Thyroid gland (tissue), 4 donors: ENCODE measurements at regions of chr11 and their contacts with region 1.

Region 1: GRCh38 chr11:15663777-15664218 is 549.1 kb downstream of the INSC start:
- DNase-seq: peak; percentile 83 to 89
- H3K4me3 ChIP-seq: no peak overlapping the region
- H3K27ac ChIP-seq: peak overlapping the region; percentile 63 to 81 (median 73)
- H3K4me1 ChIP-seq: peaks cover 8 to 32% of the 10 kb centered on the region in 2 donors
- H3K27me3 ChIP-seq: no peaks in the 10 kb centered on the region
- CTCF ChIP-seq: no peak
- POLR2A ChIP-seq: no peak

Region 2: GRCh38 chr11:15390857-15391256 is 272.9 kb before region 1 on chr11:
- intact Hi-C with region 1: no loop called
- DNase-seq: no peak
- H3K4me3 ChIP-seq: no peak overlapping the region
- H3K27ac ChIP-seq: no peak overlapping the region
- H3K4me1 ChIP-seq: no peaks in the 10 kb centered on the region
- H3K27me3 ChIP-seq: no peaks in the 10 kb centered on the region
- CTCF ChIP-seq: no peak
- POLR2A ChIP-seq: no peak

Region 3: DNA sequence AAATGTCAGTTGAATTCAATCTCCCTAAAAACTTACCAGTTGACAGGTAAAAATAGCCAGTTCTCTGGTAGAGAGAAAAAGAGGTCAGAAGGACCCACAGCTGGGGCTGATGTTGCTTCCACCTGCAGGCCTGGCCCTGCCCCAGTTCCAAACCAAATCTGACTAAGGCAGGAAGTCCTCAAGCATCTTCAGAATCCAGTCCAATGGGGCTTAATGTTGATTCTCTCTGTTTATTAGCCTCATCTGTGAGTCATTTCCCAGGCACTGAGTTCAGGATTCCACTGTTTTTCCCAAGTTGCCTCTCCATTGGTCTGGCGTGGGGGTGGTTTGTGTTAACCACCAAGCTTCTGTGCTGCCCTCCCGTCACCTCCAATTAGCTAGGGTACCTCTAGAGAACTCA is 52.8 kb after region 1 on chr11:
- intact Hi-C with region 1: loop called (anchors 2 kb)
- DNase-seq: no peak
- H3K4me3 ChIP-seq: no peak overlapping the region
- H3K27ac ChIP-seq: no peak overlapping the region
- H3K4me1 ChIP-seq: peaks cover 9 to 20% of the 10 kb centered on the region in 2 donors
- H3K27me3 ChIP-seq: no peaks in the 10 kb centered on the region
- CTCF ChIP-seq: no peak
- POLR2A ChIP-seq: no peak

Region 4: GRCh38 chr11:15801616-15802015 is 137.8 kb after region 1 on chr11:
- intact Hi-C with region 1: no loop called
- DNase-seq: no peak
- H3K4me3 ChIP-seq: no peak overlapping the region
- H3K27ac ChIP-seq: no peak overlapping the region
- H3K4me1 ChIP-seq: peaks cover 0 to 3% of the 10 kb centered on the region in 2 donors
- H3K27me3 ChIP-seq: no peaks in the 10 kb centered on the region
- CTCF ChIP-seq: no peak
- POLR2A ChIP-seq: no peak

Region 5: GRCh38 chr11:15911377-15912044 is 247.7 kb after region 1 on chr11:
- intact Hi-C with region 1: no loop called
- DNase-seq: peak; percentile 79 to 80
- H3K4me3 ChIP-seq: no peak overlapping the region
- H3K27ac ChIP-seq: no peak overlapping the region
- H3K4me1 ChIP-seq: no peaks in the 10 kb centered on the region
- H3K27me3 ChIP-seq: no peaks in the 10 kb centered on the region
- CTCF ChIP-seq: no peak
- POLR2A ChIP-seq: no peak